Aorta (tissue), 5 donors: ENCODE measurements at regions of chr1 and their contacts with region 1.

Region 1: DNA sequence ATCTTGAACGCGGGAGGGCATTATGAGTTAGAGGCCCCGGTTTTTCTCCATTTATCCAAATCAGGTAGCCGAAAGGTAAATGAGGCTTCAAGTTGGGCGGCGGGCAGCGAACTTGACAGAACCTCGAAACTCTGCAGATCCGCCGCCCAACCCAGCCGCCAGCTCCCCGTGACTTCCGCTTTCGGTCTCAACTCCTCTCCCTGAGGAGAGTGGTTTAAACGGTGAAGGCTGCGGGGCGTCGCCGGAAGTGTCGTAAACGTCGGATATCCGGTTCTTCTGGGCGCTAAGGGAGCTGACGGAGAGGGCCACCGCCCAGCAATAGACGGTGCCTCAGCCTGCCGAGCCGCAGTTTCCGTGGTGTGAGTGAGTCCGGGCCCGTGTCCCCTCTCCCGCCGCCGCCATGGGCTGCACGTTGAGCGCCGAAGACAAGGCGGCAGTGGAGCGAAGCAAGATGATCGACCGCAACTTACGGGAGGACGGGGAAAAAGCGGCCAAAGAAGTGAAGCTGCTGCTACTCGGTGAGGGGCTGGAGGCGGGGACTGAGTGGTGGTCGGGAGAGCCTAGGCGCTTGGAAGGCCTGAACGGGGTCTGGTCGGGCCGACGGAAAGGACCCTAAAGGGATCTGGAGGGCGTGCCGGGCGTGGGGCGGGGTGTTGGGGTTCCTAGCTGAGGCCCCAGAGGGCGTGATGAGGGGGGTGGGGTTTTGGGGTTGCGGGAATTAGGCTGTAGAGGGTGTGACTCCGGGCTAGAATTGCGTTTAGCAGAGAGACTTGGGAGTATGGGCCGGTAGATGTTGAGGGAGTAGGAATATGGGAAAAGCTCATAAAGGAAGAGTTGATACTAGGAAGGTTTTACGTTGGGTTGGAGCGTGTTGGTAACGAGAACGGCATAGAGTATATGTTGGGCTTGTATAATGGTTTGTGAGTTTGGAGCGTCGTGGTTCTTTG is at the start of gene GNAI3:
- DNase-seq: peak; percentile 99
- ATAC-seq: peak; percentile 98
- H3K4me3 ChIP-seq: peak within 1 kb of the TSS; percentile 83 to 96
- H3K27ac ChIP-seq: peak within 1 kb of the TSS; percentile 67 to 97
- H3K4me1 ChIP-seq: no peaks in the 10 kb centered on the region
- H3K27me3 ChIP-seq: no peaks in the 10 kb centered on the region
- total RNA-seq, gene GNAI3: 7.0 to 8.2 TPM

Region 2: DNA sequence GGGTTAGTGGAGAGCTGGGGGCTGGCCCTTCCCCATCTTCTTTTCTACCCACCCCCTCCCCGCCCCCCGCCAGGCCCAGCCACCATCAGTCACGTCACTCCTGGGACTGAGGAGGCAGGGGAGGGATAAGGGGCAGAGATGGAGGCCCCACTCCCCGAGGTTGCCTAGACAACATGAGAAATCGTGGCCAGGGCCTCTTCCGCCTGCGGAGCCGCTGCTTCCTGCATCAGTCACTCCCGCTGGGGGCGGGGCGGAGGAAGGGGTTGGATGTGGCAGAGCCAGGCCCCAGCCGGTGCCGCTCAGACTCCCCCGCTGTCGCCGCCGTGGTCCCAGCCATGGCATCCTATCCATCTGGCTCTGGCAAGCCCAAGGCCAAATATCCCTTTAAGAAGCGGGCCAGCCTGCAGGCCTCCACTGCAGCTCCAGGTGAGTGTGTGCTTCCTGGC is 72.3 kb after region 1 on chr1:
- intact Hi-C with region 1: loop called (anchors 2 kb)
- DNase-seq: peak; percentile 98 to 99
- ATAC-seq: peak; percentile 91
- H3K4me3 ChIP-seq: peak overlapping the region; percentile 53 to 73
- H3K27ac ChIP-seq: peak overlapping the region in 1 of 2 donors; percentile 49
- H3K4me1 ChIP-seq: no peaks in the 10 kb centered on the region
- H3K27me3 ChIP-seq: no peaks in the 10 kb centered on the region

Region 3: DNA sequence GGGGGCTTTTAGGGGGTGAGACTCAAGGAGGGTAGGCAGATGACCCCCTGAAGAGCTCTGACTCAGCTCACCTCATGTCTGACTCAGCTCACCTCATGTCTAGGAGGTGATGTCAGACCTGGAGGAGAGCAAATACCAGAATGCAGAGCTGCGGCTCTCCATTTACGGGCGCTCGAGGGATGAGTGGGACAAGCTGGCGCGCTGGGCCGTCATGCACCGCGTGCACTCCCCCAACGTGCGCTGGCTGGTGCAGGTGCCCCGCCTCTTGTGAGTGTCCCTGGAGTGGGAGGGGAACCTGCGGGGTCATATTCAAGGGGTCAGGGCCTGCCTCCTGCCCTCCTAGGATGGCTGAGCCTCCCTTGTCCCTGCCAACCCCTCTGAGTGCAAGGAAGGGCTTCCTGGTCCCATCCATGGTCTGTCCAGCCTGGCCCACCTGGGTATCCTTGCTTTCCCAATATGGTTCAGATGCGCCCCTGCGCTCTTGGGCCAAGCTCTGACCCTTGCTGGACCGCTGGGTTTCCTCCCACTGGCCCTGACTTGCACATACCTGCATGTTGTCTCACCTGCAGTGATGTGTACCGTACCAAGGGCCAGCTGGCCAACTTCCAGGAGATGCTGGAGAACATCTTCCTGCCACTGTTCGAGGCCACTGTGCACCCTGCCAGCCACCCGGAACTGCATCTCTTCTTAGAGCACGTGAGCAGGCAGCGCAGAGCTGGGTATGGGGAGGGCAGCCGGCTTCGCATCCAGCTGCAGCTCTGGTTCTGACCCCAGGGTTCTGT is 80.1 kb after region 1 on chr1:
- intact Hi-C with region 1: loop called in 1 of 2 experiments (anchors 2 kb)
- DNase-seq: no peak
- ATAC-seq: no peak
- H3K4me3 ChIP-seq: no peak overlapping the region
- H3K27ac ChIP-seq: no peak overlapping the region
- H3K4me1 ChIP-seq: no peaks in the 10 kb centered on the region
- H3K27me3 ChIP-seq: no peaks in the 10 kb centered on the region

Region 4: GRCh38 chr1:109643385-109644230 is 95.0 kb after region 1 on chr1:
- intact Hi-C with region 1: loop called in 1 of 2 experiments (anchors 1 kb)
- DNase-seq: peak; percentile 92 to 96
- ATAC-seq: peak; percentile 77
- H3K4me3 ChIP-seq: no peak overlapping the region
- H3K27ac ChIP-seq: no peak overlapping the region
- H3K4me1 ChIP-seq: no peaks in the 10 kb centered on the region
- H3K27me3 ChIP-seq: no peaks in the 10 kb centered on the region

Region 5: GRCh38 chr1:109687616-109688499 is 139.3 kb after region 1 on chr1 and contains the start of gene GSTM1:
- intact Hi-C with region 1: loop called in 1 of 2 experiments (anchors 5 kb)
- DNase-seq: peak in 1 of 2 donors; percentile 93
- ATAC-seq: no peak
- H3K4me3 ChIP-seq: peak within 1 kb of the TSS in 1 of 2 donors; percentile 37
- H3K27ac ChIP-seq: peak within 1 kb of the TSS in 1 of 2 donors; percentile 66
- H3K4me1 ChIP-seq: no peaks in the 10 kb centered on the region
- H3K27me3 ChIP-seq: no peaks in the 10 kb centered on the region
- total RNA-seq, gene GSTM1: 63.8 TPM in 1 of 2 donors, not detected in the other

Region 6: GRCh38 chr1:109773146-109773899 is 224.7 kb after region 1 on chr1:
- intact Hi-C with region 1: loop called (anchors 1 to 2 kb)
- DNase-seq: peak; percentile 90
- ATAC-seq: peak; percentile 89
- H3K4me3 ChIP-seq: no peak overlapping the region
- H3K27ac ChIP-seq: no peak overlapping the region
- H3K4me1 ChIP-seq: no peaks in the 10 kb centered on the region
- H3K27me3 ChIP-seq: no peaks in the 10 kb centered on the region

Region 7: GRCh38 chr1:109984456-109985275 is 436.1 kb after region 1 on chr1 and contains the start of gene AHCYL1:
- intact Hi-C with region 1: loop called in 1 of 2 experiments (anchors 10 kb)
- DNase-seq: peak; percentile 100
- ATAC-seq: peak; percentile 98
- H3K4me3 ChIP-seq: peak within 1 kb of the TSS; percentile 2 to 65
- H3K27ac ChIP-seq: peak within 1 kb of the TSS; percentile 32 to 82
- H3K4me1 ChIP-seq: no peaks in the 10 kb centered on the region
- H3K27me3 ChIP-seq: no peaks in the 10 kb centered on the region
- total RNA-seq, gene AHCYL1: 69.0 to 79.0 TPM